ENCODE measurements at regions of chr7 and their contacts with region 1.

Region 1: GRCh38 chr7:26200444-26201246 is at the start of gene HNRNPA2B1:
- H3K4me3 Mint-ChIP-seq: peak within 1 kb of the TSS; percentile 99
- H3K27ac Mint-ChIP-seq: peak within 1 kb of the TSS; percentile 100
- H3K4me1 Mint-ChIP-seq: peaks cover 42% of the 10 kb centered on the region
- H3K27me3 Mint-ChIP-seq: no peaks in the 10 kb centered on the region

Region 2: DNA sequence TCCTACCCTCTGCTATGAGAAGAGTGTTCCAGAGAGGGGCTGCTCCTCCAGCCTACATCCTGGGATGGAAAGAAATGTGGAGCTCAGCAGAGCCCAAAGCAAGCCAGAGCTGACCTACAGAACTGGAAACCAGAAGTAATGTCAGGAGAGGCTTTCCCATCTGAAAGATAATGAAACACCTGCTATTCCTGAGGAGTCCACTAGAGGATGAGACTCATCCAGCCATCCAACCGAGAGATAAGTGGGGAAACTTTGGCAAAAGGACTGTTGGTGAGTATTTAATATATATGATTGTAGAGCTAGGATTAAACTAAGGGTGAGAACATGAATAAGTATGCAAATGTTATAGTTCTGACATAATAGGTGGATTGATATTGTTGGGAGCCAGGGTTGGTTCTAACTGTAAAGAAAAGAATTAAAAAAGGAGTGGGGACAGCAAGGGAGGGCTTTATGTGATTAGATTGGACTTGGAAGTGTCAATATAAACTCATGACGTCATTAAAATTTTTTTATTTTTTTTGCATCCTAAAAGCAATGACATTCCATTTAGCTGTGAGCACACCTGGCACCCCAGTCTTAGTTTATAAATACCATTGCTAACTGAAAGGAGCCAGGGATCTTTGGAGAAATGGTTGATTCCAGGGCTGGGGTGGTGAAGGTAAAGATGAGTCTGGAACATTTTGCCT is 361.4 kb before region 1 on chr7:
- intact Hi-C with region 1: no loop called
- H3K4me3 Mint-ChIP-seq: no peak overlapping the region
- H3K27ac Mint-ChIP-seq: no peak overlapping the region
- H3K4me1 Mint-ChIP-seq: no peaks in the 10 kb centered on the region
- H3K27me3 Mint-ChIP-seq: peaks cover 16% of the 10 kb centered on the region

Region 3: DNA sequence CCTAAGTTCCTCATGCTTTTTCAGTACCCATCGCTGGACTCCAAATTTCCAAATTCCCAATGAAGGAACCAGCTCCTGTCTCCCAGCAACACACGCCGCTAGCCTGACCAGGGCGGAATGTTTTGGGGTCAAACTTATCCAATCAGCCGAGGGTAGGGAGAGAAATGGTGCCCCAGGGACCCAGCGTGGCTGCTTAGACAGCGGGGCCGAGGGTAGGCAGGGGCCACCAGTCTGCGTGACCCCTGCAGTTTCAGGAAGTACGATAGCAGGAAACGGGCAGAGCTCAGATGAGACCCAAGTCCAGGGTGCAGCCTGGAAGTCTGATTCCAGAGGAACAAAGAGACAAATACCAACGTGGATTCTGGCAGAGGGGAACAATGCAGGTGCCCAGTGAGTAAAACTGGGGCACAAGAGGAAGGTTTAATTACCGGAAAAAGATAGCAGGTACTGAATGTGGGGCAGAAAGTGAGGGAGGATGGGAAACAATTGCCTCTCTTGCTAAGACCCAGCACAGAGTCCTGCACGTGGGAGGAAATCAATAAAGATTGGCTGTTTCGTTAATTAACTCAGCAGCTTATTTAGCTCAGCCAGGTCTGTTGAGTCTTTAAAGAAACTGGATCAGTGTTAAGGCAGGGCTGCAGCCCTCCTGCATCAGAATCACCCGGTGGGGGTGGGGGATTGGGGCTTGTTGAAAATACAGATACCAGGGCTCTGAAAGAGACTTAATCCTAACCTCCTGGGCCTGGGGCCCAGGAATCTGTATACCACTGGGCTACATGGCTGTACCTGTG is 99.1 kb before region 1 on chr7:
- intact Hi-C with region 1: loop called (anchors 2 kb)
- H3K4me3 Mint-ChIP-seq: peak overlapping the region; percentile 85
- H3K27ac Mint-ChIP-seq: peak overlapping the region; percentile 98
- H3K4me1 Mint-ChIP-seq: peaks cover 65% of the 10 kb centered on the region
- H3K27me3 Mint-ChIP-seq: no peaks in the 10 kb centered on the region

Region 4: GRCh38 chr7:26216049-26216448 is 15.4 kb after region 1 on chr7:
- intact Hi-C with region 1: no loop called
- H3K4me3 Mint-ChIP-seq: no peak overlapping the region
- H3K27ac Mint-ChIP-seq: no peak overlapping the region
- H3K4me1 Mint-ChIP-seq: peaks cover 12% of the 10 kb centered on the region
- H3K27me3 Mint-ChIP-seq: no peaks in the 10 kb centered on the region

Region 5: GRCh38 chr7:26291699-26292538 is 91.3 kb after region 1 on chr7 and contains the start of gene SNX10:
- intact Hi-C with region 1: loop called (anchors 5 kb)
- H3K4me3 Mint-ChIP-seq: peak within 1 kb of the TSS; percentile 93
- H3K27ac Mint-ChIP-seq: peak within 1 kb of the TSS; percentile 92
- H3K4me1 Mint-ChIP-seq: peaks cover 68% of the 10 kb centered on the region
- H3K27me3 Mint-ChIP-seq: no peaks in the 10 kb centered on the region

Region 6: DNA sequence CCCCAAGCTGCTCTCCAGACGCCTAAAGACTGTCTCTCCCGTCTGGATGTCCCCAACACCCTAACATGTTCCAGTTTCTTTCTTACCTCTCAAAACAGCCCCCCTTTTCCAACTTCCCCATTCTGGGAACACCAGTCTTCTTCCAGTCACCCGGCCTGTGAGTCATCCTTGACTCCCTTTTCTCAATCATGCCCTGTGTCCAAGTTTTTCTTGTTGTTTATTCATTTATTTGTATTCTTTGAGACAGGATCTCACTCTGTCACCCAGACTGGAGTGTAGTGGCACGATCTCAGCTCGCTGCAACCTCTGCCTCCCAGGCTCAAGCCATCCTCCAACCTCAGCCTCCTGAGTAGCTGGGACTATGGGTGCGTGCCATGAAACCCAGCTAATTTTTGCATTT is 106.6 kb after region 1 on chr7:
- intact Hi-C with region 1: loop called (anchors 5 kb)
- H3K4me3 Mint-ChIP-seq: peak overlapping the region; percentile 38
- H3K27ac Mint-ChIP-seq: peak overlapping the region; percentile 84
- H3K4me1 Mint-ChIP-seq: peaks cover 84% of the 10 kb centered on the region
- H3K27me3 Mint-ChIP-seq: no peaks in the 10 kb centered on the region

Measured in dendritic cell treated with granulocyte-macrophage colony-stimulating factor and Interleukin-4, amounts not matched to agents 40 ng/mL and 50 ng/mL, for 4 days (primary cell).